ENCODE measurements at regions of chr1 and their contacts with region 1.

Region 1: GRCh38 chr1:10724948-10725847 is 71.2 kb downstream of the CASZ1 start:
- DNase-seq: peak; percentile 84
- H3K4me3 ChIP-seq: no peak overlapping the region
- H3K27ac ChIP-seq: peak overlapping the region; percentile 66 to 90 (median 84)
- H3K4me1 ChIP-seq: peaks cover 0 to 58% (median 55%) of the 10 kb centered on the region in 4 donors
- H3K27me3 ChIP-seq: no peaks in the 10 kb centered on the region
- CTCF ChIP-seq: no peak
- EP300 ChIP-seq: peak in 1 of 4 donors; percentile 1
- POLR2A ChIP-seq: no peak

Region 2: GRCh38 chr1:10788592-10789006 is 63.4 kb after region 1 on chr1:
- intact Hi-C with region 1: loop called (anchors 5 kb)
- DNase-seq: peak; percentile 82
- H3K4me3 ChIP-seq: no peak overlapping the region
- H3K27ac ChIP-seq: peak overlapping the region in 3 of 4 donors; percentile 89 to 92 (median 91)
- H3K4me1 ChIP-seq: peaks cover 0 to 91% (median 67%) of the 10 kb centered on the region in 4 donors
- H3K27me3 ChIP-seq: peaks cover under 1 to 12% (median 4%) of the 10 kb centered on the region in 3 donors
- CTCF ChIP-seq: peak in 3 of 4 experiments; percentile 20 to 31 (median 25)
- EP300 ChIP-seq: no peak
- POLR2A ChIP-seq: no peak

Region 3: GRCh38 chr1:10901086-10901890 is 176.1 kb after region 1 on chr1:
- intact Hi-C with region 1: no loop called
- DNase-seq: no peak
- H3K4me3 ChIP-seq: no peak overlapping the region
- H3K27ac ChIP-seq: no peak overlapping the region
- H3K4me1 ChIP-seq: no peaks in the 10 kb centered on the region
- H3K27me3 ChIP-seq: peaks cover 5 to 34% (median 7%) of the 10 kb centered on the region in 3 donors
- CTCF ChIP-seq: no peak
- EP300 ChIP-seq: no peak
- POLR2A ChIP-seq: no peak

Measured in sigmoid colon (tissue), 7 donors.